OCI-LY7 (cell line): ENCODE measurements at regions of chrX and their contacts with region 1.

Region 1: GRCh38 chrX:1391707-1392375 is at the start of gene SLC25A6:
- DNase-seq: peak; percentile 99
- H3K4me3 ChIP-seq: peak within 1 kb of the TSS; percentile 99
- H3K27ac ChIP-seq: peak within 1 kb of the TSS; percentile 90
- H3K4me1 ChIP-seq: peaks cover 29% of the 10 kb centered on the region
- CTCF ChIP-seq: 0 out of 2 replicates have a peak, but pooled peaks have one; percentile 13
- total RNA-seq, gene SLC25A6: 196 and 211 TPM in 2 replicates

Region 2: GRCh38 chrX:1205680-1206611 is 185.9 kb before region 1 on chrX:
- CTCF ChIA-PET with region 1: no interaction called
- POLR2A ChIA-PET with region 1: no interaction called
- intact Hi-C with region 1: loop called (anchors 5 kb)
- DNase-seq: peak; percentile 95
- H3K4me3 ChIP-seq: peak overlapping the region; percentile 72
- H3K27ac ChIP-seq: peak overlapping the region; percentile 63
- H3K4me1 ChIP-seq: peaks cover 24% of the 10 kb centered on the region
- CTCF ChIP-seq: no peak

Region 3: DNA sequence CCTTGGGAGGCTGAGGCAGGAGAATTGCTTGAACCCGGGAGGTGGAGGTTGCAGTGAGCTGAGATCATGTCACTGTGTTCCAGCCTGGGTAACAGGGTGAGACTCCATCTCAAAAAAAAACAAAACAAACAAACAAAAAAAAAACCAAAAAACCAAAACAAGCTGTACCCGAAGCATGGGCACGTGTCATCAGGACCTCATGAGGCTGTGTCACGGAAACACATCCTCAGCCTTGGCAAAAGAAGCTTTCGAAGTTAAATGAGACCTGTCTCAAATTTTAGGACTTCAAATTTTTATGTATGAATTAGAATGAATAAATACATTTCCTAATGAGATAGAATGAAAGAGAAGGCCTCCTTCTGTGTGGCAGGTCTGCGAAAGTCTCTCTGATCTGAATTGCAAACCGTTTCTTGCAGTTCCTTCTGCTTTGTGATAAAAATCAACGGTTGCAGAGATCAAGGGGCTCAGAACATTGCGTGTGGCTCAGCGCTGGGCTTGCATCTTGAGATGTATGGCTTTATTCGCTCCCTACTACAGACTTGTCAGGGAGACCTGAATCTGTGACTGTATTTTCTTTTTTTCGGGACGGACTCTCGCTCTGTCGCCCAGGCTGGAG is 159.9 kb before region 1 on chrX:
- CTCF ChIA-PET with region 1: no interaction called
- POLR2A ChIA-PET with region 1: no interaction called
- intact Hi-C with region 1: no loop called
- DNase-seq: no peak
- H3K4me3 ChIP-seq: no peak overlapping the region
- H3K27ac ChIP-seq: no peak overlapping the region
- H3K4me1 ChIP-seq: no peaks in the 10 kb centered on the region
- CTCF ChIP-seq: no peak

Region 4: GRCh38 chrX:1246816-1247215 is 145.0 kb before region 1 on chrX:
- CTCF ChIA-PET with region 1: no interaction called
- POLR2A ChIA-PET with region 1: no interaction called
- intact Hi-C with region 1: loop called (anchors 5 kb)
- DNase-seq: peak; percentile 85
- H3K4me3 ChIP-seq: no peak overlapping the region
- H3K27ac ChIP-seq: no peak overlapping the region
- H3K4me1 ChIP-seq: peaks cover 13% of the 10 kb centered on the region
- CTCF ChIP-seq: peak; percentile 88

Region 5: GRCh38 chrX:1323315-1323714 is 68.5 kb before region 1 on chrX:
- CTCF ChIA-PET with region 1: no interaction called
- POLR2A ChIA-PET with region 1: no interaction called
- intact Hi-C with region 1: loop called (anchors 2 kb)
- DNase-seq: peak; percentile 79
- H3K4me3 ChIP-seq: no peak overlapping the region
- H3K27ac ChIP-seq: no peak overlapping the region
- H3K4me1 ChIP-seq: peaks cover 8% of the 10 kb centered on the region
- CTCF ChIP-seq: peak; percentile 74

Region 6: DNA sequence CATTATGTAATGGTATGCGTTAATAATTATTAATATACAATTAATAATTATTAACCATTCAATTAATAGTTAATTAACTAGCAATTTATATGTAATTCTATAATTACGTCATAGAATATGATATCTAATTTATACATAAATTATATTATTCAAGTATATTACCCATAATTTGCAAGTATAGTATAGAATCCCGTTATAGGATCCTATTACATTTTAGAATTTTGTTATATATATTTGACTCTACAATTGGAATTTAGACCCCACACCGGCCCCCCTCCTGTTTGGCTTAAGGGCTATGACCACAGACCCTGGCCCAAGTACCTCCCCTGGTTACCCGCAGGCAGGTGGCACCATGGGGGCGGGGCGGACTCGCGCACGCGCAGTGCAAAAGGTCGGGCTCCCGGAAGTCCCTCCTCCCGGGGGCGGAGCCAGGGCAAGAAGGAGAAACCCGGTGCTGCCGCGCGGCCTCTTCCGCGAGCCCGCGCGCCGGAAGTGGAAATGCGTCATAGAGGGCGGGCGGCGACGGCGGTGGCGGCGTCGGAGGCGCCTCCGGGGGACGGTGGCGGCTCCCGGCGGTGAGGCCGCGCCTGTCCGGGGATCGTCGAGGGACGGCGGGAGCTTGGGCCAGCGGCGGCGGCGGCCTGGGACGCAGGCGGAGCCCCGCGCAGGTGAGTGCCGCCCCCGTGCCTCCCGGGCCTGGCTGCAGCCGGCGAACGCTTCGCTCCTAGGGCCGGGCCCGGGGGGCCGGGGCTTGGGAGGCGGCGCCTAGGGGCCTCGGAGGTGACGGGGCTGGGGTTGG is 199.5 kb after region 1 on chrX and contains the start of gene AKAP17A:
- CTCF ChIA-PET with region 1: no interaction called
- POLR2A ChIA-PET with region 1: no interaction called
- intact Hi-C with region 1: loop called (anchors 1 kb)
- DNase-seq: peak; percentile 97
- H3K4me3 ChIP-seq: peak within 1 kb of the TSS; percentile 90
- H3K27ac ChIP-seq: peak within 1 kb of the TSS; percentile 66
- H3K4me1 ChIP-seq: peaks cover 30% of the 10 kb centered on the region
- CTCF ChIP-seq: peak; percentile 10; the same call in 1 of the 2 replicates
- total RNA-seq, gene AKAP17A: 61.8 and 64.2 TPM in 2 replicates

Region 7: GRCh38 chrX:1914606-1915365 is 522.9 kb after region 1 on chrX:
- CTCF ChIA-PET with region 1: no interaction called
- POLR2A ChIA-PET with region 1: no interaction called
- intact Hi-C with region 1: no loop called
- DNase-seq: no peak
- H3K4me3 ChIP-seq: no peak overlapping the region
- H3K27ac ChIP-seq: no peak overlapping the region
- H3K4me1 ChIP-seq: no peaks in the 10 kb centered on the region
- CTCF ChIP-seq: no peak